ENCODE measurements at regions of chr3 and their contacts with region 1.

Region 1: GRCh38 chr3:193971261-193971751 is 164.6 kb upstream of the HES1 start:
- DNase-seq: peak; percentile 68
- CTCF ChIP-seq: no peak

Region 2: DNA sequence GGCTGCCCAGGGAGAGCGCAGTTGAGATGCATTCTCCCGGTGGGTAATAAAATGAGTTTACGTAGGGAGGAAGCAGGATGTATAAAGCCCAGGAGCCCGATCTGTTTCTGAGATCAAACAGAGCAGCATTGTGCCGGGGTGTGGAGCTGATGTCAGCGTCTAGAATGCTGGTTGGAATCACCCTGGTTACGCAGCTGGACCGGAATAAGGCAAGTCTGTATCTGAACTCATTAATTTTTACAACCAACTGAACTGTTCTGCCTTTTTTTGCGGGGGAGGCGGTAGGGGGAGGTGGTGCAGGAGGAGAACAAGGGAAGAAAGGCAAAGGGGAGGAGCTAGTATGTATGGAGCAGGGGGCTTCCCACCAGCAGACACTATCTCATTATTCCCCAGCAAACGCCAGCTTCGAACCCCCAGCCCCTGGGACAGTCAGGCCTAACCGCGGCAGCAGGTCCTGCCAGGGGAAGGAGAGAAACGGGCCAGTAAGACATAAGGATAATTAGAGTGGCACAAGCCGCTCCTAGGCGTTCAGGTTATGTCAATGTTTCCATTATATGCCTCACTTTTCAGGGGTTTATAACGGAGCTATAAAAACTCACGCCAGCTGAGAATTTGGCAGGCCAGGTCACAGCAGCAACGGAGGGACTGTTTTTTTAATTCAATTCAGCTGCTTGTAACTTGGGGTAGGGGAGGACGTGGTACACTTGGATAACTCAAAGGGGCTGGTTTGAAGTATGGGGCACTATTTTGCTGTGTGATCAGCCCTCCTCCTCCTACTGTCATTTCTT is 10.6 kb before region 1 on chr3:
- CTCF ChIA-PET with region 1: interaction called, 27 read pairs
- POLR2A ChIA-PET with region 1: no interaction called
- DNase-seq: no peak
- CTCF ChIP-seq: no peak